Body of pancreas (tissue), 4 donors: ENCODE measurements at regions of chr12 and their contacts with region 1.

Region 1: GRCh38 chr12:96061864-96062453 is 26.6 kb upstream of the LTA4H start:
- DNase-seq: peak; percentile 74 to 85 (median 82)
- ATAC-seq: peak; percentile 83
- H3K4me3 ChIP-seq: no peak overlapping the region
- H3K27ac ChIP-seq: no peak overlapping the region
- H3K4me1 ChIP-seq: no peaks in the 10 kb centered on the region
- H3K27me3 ChIP-seq: no peaks in the 10 kb centered on the region
- CTCF ChIP-seq: peak; percentile 59 to 95 (median 86)
- POLR2A ChIP-seq: no peak

Region 2: GRCh38 chr12:96219698-96220206 is 157.8 kb after region 1 on chr12:
- intact Hi-C with region 1: loop called (anchors 5 kb)
- DNase-seq: no peak
- ATAC-seq: no peak
- H3K4me3 ChIP-seq: no peak overlapping the region
- H3K27ac ChIP-seq: no peak overlapping the region
- H3K4me1 ChIP-seq: peaks cover 17% of the 10 kb centered on the region
- H3K27me3 ChIP-seq: no peaks in the 10 kb centered on the region
- CTCF ChIP-seq: no peak
- POLR2A ChIP-seq: no peak

Region 3: DNA sequence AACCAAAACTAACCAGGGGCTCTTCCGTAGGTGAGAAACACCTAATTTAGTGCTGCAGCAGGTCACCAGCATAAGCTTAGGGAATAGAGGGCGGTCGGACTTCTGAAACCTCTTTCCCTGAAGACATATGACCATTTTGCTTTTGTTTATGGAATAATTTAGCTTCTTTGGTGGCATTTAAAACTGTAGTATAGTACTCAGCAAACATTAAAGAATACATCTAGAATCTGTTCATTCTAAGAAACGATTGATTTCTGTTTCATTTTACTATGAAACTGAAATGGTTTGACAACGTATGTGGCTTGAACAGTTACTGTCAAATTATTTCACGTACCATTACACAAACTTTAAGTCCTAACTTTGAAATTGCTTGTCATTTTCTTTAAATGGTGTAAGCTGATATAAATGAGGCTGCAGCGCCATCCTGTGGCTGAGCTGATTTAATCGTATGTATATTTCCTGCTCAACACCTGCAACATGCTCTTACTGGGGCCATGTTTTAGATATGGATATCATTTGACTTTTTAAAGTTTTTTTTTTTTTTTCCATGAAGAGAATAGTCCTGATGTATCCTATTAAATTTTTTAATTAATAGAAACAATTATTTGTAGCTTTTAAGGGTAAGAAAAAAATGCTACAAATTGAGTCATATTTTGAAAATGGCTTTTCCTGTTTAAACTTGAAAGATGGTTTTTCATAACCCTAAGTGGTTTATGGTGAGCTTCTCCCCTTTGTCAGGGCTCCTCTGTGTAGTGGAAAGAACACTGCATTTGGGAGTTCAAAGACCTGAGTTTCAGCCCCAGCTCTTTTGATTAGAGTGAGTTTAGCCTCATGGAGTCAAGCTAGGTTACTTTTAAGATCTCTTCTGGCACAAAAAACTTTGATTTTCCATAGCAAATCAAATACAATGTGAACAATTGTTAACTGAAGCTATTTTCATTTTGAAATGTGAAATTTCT is 454.8 kb after region 1 on chr12:
- intact Hi-C with region 1: loop called (anchors 5 kb)
- DNase-seq: peak; percentile 61 to 81 (median 79)
- ATAC-seq: peak; percentile 38
- H3K4me3 ChIP-seq: no peak overlapping the region
- H3K27ac ChIP-seq: no peak overlapping the region
- H3K4me1 ChIP-seq: no peaks in the 10 kb centered on the region
- H3K27me3 ChIP-seq: no peaks in the 10 kb centered on the region
- CTCF ChIP-seq: peak in 6 of 7 experiments; percentile 24 to 76 (median 66)
- POLR2A ChIP-seq: no peak